ENCODE measurements at regions of chr15 and their contacts with region 1.

Region 1: DNA sequence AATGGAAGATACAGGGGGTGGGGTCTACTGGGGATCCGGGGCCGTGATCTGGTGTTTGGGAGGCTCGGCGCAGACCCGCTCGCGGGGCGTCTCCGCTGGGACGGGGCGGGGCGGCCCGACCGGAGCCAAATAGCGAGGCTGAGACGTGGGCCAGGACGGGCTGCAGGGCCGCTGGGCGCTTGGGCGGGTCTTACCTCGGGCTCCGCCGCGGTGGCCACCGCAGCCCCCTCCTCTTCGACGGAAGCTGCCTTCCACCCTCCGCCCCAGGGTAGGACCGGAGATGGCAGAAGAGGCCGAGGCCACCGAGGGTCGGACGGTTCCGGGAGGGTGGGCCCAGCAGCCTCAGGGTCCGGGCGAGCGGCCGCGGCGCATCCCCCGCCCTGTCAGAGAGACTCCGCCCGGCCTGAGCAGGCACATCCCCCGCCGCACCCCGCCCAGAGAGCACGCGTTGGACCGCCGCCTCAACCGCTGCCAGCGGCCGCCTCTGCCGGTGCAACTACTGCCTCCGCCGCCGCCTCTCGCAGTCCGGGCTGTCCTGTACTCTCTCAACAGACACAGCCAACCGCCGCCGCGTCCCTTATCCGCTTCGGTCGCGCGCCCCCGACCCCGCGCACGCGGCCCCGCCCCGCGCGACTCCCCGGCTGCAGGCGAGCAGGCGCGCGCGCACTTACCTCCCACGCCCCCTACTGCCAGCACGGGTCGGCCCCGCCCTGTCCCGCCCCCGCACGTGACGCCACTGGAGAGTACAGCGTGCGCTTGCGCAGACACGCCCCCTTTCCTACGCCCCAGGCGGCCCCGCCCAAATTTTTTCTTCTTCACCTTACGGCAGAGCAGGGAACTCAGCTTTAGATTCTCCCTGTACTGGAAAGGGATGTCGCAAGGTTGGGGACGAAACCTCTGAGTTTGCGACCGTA is at the start of gene MYO9A:
- DNase-seq: peak; percentile 97

Region 2: GRCh38 chr15:71934446-71934845 is 183.3 kb before region 1 on chr15:
- CTCF ChIA-PET with region 1: no interaction called
- POLR2A ChIA-PET with region 1: no interaction called
- DNase-seq: no peak

Region 3: DNA sequence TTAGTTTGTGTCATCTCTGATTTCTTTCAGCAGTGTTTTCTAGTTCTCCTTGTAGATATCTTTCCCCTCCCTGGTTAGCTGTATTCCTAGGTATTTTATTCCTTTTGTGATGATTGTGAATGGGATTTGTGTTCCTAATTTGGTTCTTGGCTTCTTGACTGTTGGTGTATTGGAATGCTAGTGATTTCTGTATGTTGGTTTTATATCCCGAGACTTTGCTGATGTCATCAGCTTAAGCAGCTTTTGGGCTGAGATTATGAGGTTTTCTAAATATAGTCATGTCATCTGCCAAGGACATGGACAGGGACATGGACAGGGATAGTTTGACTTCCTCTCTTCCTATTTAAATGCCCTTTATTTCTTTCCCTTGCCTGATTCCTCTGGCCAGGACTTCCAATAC is 35.6 kb before region 1 on chr15:
- CTCF ChIA-PET with region 1: no interaction called
- POLR2A ChIA-PET with region 1: no interaction called
- DNase-seq: no peak

Region 4: DNA sequence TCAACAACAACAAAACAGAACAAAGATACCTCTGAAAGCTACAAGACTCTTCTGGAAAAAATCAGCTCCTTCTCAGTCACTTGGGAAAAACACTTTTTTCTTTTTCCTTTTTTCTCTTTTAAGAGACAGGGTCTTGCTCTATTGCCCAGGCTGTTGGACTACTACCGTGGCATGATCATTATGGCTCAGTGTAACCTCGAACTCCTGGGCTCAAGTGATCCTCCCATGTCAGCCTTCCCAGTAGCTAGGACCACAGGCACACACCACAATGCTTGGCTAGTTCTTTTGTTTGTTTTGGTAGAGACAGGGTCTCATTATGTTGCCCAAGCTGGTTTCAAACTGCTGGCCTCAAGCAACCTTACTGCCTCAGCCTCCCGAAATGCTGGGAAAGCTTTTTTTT is 12.6 kb before region 1 on chr15:
- CTCF ChIA-PET with region 1: no interaction called
- POLR2A ChIA-PET with region 1: interaction called, 13 read pairs
- DNase-seq: no peak

Region 5: GRCh38 chr15:72127724-72128322 is 10.1 kb after region 1 on chr15:
- CTCF ChIA-PET with region 1: no interaction called
- POLR2A ChIA-PET with region 1: interaction called, 18 read pairs
- DNase-seq: no peak

Measured in HEK293T (cell line).